Spleen (tissue), 13 donors: ENCODE measurements at regions of chr1 and their contacts with region 1.

Region 1: DNA sequence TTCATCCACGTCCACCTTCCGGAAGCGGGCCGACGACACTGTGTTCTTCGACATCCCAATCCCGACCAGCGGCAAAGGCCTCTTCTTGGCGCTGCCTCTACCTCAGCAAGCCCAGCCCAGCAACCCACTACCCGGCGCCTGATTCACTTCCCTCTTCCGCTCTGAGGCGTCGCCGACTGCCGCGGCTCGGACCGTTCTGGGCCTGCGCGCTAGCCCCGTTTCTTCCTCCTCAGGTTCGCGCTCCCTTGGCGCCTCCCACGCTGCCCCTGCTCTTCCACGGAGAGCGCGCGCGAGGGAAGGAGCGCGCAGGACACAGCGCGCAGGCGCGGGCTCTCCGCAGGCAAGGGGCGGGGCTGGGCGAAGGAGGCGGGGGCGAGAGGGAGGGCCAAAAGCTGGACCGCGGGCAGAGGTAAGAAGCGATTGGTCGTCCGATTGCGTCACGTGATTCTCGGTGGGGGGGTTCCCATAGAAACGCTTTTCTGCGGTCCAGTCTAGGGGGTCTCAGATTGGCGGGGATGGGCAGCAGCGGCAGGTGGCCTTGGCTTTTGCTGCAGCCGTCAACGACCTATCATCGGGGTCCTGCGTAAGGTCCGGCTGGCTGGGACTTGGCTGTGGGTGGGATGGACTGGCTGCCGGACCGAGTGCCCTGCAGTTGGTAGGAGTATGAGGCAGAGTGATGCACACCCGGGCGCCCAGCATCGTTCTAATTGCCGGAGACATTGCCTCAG is at the start of gene ARPC5:
- DNase-seq: peak; percentile 99
- H3K4me3 ChIP-seq: peak within 1 kb of the TSS; percentile 86 to 95 (median 90)
- H3K27ac ChIP-seq: peak within 1 kb of the TSS; percentile 89 to 99 (median 97)
- H3K4me1 ChIP-seq: peaks cover 24 to 73% (median 47%) of the 10 kb centered on the region in 6 donors
- H3K27me3 ChIP-seq: no peaks in the 10 kb centered on the region
- CTCF ChIP-seq: peak in 2 of 11 experiments; percentile 18 to 37
- POLR2A ChIP-seq: peak; percentile 57 to 89 (median 84)
- total RNA-seq, gene ARPC5: 141 to 221 (median 171) TPM

Region 2: GRCh38 chr1:183471743-183472487 is 163.9 kb before region 1 on chr1:
- intact Hi-C with region 1: loop called (anchors 5 kb)
- DNase-seq: peak; percentile 99
- H3K4me3 ChIP-seq: peak overlapping the region; percentile 65 to 99 (median 94)
- H3K27ac ChIP-seq: peak overlapping the region; percentile 93 to 98 (median 96)
- H3K4me1 ChIP-seq: peaks cover 21 to 59% (median 45%) of the 10 kb centered on the region in 6 donors
- H3K27me3 ChIP-seq: no peaks in the 10 kb centered on the region
- CTCF ChIP-seq: peak in 6 of 11 experiments; percentile 10 to 49 (median 36)
- POLR2A ChIP-seq: no peak